ENCODE measurements at regions of chr2 and their contacts with region 1.

Region 1: DNA sequence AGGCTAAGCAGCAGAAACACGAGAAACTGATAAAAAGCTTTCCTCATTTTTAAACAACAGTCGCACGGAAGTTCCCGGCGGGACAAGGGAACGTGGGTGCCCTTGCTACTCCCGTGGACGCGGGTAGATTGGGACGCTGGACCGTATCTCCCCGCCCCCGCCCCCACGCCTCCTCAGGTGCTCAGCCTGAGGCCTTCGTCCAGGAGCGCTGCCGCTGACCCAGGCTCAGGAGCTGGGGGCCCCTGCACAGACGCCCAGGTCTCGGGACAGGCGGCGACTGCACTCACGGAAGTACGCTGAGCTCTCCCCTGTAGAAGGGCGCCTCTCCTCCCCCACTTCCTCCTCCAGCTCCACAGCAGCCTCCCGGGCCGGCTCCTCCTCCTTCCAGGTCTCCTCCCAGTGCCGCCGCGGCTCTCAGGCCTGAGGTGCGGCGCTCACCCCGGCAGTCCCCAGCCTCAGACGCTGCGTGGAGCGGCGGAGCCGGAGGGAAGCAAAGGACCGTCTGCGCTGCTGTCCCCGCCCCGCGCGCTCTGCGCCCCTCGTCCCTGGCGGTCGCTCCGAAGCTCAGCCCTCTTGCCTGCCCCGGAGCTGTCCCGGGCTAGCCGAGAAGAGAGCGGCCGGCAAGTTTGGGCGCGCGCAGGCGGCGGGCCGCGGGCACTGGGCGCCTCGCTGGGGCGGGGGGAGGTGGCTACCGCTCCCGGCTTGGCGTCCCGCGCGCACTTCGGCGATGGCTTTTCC is at the start of gene ITGAV:
- DNase-seq: peak; percentile 90
- ATAC-seq: peak; percentile 97
- H3K4me3 Mint-ChIP-seq: peak within 1 kb of the TSS; percentile 82
- H3K27ac Mint-ChIP-seq: peak within 1 kb of the TSS; percentile 74
- H3K4me1 Mint-ChIP-seq: peaks cover 32% of the 10 kb centered on the region
- H3K27me3 Mint-ChIP-seq: no peaks in the 10 kb centered on the region
- CTCF ChIP-seq: no peak
- total RNA-seq, gene ITGAV: 26.5 to 30.0 TPM (median 27.7 TPM) in 3 replicates

Region 2: DNA sequence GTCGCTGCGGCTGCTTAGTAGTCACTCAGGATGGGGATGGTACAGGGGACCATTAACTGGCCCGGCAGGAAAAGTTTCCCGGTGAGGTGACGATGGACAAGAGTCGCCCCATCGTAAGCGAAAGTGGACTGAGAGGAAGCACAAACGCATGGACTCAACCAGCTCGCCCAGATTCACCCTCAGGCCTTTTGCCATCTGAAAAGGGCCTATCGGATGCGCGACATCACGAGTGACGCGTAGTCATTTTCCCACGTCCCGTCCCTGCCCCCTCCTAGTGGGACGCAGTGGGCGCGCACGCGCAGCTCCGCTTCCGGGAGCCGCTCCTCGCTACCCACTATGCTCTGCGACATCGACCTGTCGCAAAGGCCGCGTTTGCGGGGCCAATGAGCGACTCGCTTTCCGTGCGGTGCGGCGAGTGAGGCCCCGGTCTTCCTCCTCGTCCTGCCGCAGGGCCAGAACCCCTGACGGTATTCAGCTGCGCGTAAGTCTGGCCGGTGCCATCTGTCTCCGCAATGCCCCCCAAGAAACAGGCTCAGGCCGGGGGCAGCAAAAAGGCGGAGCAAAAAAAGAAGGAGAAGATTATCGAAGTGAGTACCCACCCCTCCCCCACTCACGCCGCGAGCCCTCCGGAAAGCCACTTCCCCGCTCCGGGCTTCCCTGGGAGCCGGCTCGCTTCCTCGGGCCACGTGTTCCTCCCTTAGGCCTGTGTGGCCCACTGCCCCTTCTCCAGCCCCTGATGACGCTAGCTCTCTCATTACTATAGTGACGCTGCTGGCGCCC is 103.7 kb before region 1 on chr2 and contains the start of gene ZC3H15:
- CTCF ChIA-PET with region 1: no interaction called
- POLR2A ChIA-PET with region 1: interaction called, 16 read pairs
- DNase-seq: peak; percentile 92
- ATAC-seq: peak; percentile 91
- H3K4me3 Mint-ChIP-seq: peak within 1 kb of the TSS; percentile 99
- H3K27ac Mint-ChIP-seq: peak within 1 kb of the TSS; percentile 99
- H3K4me1 Mint-ChIP-seq: peaks cover 44% of the 10 kb centered on the region
- H3K27me3 Mint-ChIP-seq: no peaks in the 10 kb centered on the region; the same call in 1 of the 2 replicates
- CTCF ChIP-seq: no peak
- total RNA-seq, gene ZC3H15: 60.0 to 60.9 TPM (median 60.5 TPM) in 3 replicates